ENCODE measurements at regions of chr6 and their contacts with region 1.

Region 1: DNA sequence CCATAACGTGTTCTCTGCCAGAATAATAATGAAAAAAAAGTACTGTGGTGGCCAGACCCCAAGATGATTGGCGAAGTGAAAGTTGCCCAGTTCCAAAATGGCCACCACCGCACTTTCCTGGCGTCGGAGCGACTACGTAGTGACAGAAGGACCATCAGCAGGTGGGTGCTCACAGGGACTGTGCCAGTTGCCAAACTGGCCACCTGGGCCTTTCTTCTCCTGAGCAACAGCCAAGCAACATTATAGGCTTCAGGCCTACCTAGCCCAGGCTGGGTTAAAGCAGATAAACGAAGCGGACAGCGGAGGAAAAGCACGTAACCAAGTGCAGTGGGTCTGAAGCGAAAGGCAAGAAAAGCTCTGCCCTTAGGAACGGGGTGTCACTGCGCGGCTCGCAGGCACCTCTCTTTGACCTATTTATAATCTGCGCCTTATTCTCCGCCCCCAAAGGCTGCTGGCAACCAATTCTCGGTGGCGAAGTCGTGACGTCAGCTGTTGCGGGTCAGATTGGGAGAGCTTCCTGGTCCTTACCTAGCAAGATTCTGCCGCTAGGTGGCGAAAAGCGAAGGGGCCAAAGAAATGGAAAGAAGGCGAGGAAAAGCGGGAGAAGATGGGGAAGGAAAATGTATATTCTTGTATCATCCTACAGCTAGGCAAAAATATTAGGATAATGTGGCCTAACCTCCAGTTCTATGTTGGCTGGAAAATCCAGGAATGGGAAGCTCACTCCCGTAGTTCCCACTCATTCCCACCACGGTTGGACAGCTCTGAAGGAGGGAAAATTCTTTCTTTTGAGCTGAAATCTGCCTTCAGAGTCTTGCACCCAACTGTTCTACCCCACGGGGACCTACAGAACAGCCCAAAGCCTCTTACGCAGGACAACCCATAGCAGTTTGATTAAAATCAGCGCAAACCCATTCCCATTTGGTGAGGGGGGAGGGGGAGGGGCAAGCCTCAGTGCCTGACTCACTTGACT is 6.9 kb upstream of the MOG start:
- DNase-seq: peak; percentile 99
- ATAC-seq: peak; percentile 97
- H3K4me3 Mint-ChIP-seq: peak overlapping the region; percentile 84
- H3K27ac Mint-ChIP-seq: peak overlapping the region; percentile 98
- H3K4me1 Mint-ChIP-seq: peaks cover 4% of the 10 kb centered on the region
- H3K27me3 Mint-ChIP-seq: peaks cover 3% of the 10 kb centered on the region
- CTCF ChIP-seq: peak; percentile 98

Region 2: GRCh38 chr6:29632789-29633533 is 17.0 kb before region 1 on chr6 and contains the start of gene GABBR1:
- CTCF ChIA-PET with region 1: interaction called, 61 read pairs
- POLR2A ChIA-PET with region 1: interaction called, 6 read pairs
- intact Hi-C with region 1: no loop called
- DNase-seq: peak; percentile 64
- ATAC-seq: peak; percentile 82
- H3K4me3 Mint-ChIP-seq: peak within 1 kb of the TSS; percentile 87
- H3K27ac Mint-ChIP-seq: peak within 1 kb of the TSS; percentile 66
- H3K4me1 Mint-ChIP-seq: peaks cover 25% of the 10 kb centered on the region
- H3K27me3 Mint-ChIP-seq: peaks cover 6% of the 10 kb centered on the region
- CTCF ChIP-seq: no peak
- total RNA-seq, gene GABBR1: 10.8 to 10.9 TPM

Region 3: DNA sequence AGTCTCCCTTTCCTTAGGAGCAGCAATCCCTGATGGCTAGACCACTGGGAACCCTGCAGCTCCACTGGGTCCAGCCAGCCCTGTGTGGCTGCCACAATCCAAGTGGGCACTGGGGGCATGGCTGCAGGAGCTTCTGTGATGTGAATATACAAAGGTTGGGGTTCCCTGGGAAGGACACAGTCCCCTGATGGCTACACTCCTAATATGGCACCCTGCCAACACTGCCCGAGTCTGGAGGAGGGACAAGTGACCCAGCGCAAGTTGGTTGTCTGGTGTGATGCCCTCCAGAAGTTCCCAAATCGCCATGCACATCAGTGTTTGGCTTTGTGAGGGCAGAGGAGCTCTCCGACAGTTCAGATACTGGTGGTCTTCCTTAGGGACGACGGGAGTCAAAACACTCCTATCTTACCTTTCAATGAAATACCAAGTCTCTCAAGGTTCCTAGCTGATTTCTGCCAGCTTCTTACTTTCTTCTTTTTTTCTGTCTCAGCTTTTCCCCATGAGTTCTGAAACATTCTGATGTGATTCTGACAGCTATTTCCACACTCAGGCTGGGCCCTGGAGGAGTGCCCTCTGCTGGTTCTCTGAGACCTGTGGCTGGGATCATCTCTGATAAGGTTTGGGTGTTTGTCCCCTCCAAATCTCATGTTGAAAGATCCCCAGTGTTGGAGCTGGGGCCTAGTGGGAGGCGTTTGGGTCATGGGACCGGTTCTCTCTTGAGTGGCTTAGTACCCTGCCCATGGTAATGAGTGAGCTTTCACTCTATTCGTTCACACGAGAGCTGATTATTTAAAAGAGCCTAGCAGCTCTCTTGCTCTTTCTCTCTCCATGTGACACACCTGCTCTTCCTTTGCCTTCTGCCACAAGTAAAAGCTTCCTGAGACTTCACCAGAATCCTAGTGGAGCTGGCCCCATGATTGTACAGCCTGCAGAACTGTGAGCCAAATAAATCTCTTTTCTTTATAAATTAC is 46.5 kb after region 1 on chr6:
- CTCF ChIA-PET with region 1: interaction called, 20 read pairs
- POLR2A ChIA-PET with region 1: no interaction called
- intact Hi-C with region 1: no loop called
- DNase-seq: peak; percentile 37
- ATAC-seq: no peak
- H3K4me3 Mint-ChIP-seq: no peak overlapping the region
- H3K27ac Mint-ChIP-seq: peak overlapping the region; percentile 57
- H3K4me1 Mint-ChIP-seq: no peaks in the 10 kb centered on the region
- H3K27me3 Mint-ChIP-seq: peaks cover 3% of the 10 kb centered on the region
- CTCF ChIP-seq: no peak

Region 4: GRCh38 chr6:29737707-29738630 is 88.0 kb after region 1 on chr6:
- CTCF ChIA-PET with region 1: interaction called, 13 read pairs
- POLR2A ChIA-PET with region 1: no interaction called
- intact Hi-C with region 1: no loop called
- DNase-seq: peak; percentile 83
- ATAC-seq: peak; percentile 85
- H3K4me3 Mint-ChIP-seq: no peak overlapping the region
- H3K27ac Mint-ChIP-seq: no peak overlapping the region
- H3K4me1 Mint-ChIP-seq: peaks cover 11% of the 10 kb centered on the region
- H3K27me3 Mint-ChIP-seq: no peaks in the 10 kb centered on the region
- CTCF ChIP-seq: peak; percentile 84

Region 5: DNA sequence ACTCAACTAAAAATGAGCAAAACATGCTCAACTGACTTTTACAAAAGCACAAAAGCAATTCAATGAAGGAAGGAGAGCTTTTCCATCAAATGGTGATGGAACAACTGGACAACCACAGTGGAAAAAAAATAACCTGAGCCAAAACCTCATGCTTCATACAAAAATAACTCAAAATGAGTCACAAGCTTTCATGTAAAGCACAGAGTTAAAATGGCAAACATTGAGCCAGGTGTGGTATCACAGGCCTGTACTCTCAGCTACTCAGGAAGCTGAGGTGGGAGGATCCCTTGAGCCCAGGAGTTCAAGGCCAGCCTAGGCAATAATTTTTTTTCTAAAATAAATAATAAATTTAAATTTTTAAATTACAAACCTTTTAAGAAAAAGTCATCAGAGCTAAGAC is 159.3 kb after region 1 on chr6:
- CTCF ChIA-PET with region 1: interaction called, 10 read pairs
- POLR2A ChIA-PET with region 1: no interaction called
- intact Hi-C with region 1: no loop called
- DNase-seq: no peak
- ATAC-seq: no peak
- H3K4me3 Mint-ChIP-seq: no peak overlapping the region
- H3K27ac Mint-ChIP-seq: no peak overlapping the region
- H3K4me1 Mint-ChIP-seq: no peaks in the 10 kb centered on the region
- H3K27me3 Mint-ChIP-seq: peaks cover 19% of the 10 kb centered on the region
- CTCF ChIP-seq: no peak

Measured in activated CD8-positive, alpha-beta T cell treated with anti-CD3 and anti-CD28 coated beads for 36 hours (primary cell).